Cardiac septum (tissue), 1 donor: ENCODE measurements at regions of chr1 and their contacts with region 1.

Region 1: GRCh38 chr1:45686317-45687013 is at the start of gene GPBP1L1:
- DNase-seq: peak; percentile 99
- total RNA-seq, gene GPBP1L1: 80.6 TPM

Region 2: DNA sequence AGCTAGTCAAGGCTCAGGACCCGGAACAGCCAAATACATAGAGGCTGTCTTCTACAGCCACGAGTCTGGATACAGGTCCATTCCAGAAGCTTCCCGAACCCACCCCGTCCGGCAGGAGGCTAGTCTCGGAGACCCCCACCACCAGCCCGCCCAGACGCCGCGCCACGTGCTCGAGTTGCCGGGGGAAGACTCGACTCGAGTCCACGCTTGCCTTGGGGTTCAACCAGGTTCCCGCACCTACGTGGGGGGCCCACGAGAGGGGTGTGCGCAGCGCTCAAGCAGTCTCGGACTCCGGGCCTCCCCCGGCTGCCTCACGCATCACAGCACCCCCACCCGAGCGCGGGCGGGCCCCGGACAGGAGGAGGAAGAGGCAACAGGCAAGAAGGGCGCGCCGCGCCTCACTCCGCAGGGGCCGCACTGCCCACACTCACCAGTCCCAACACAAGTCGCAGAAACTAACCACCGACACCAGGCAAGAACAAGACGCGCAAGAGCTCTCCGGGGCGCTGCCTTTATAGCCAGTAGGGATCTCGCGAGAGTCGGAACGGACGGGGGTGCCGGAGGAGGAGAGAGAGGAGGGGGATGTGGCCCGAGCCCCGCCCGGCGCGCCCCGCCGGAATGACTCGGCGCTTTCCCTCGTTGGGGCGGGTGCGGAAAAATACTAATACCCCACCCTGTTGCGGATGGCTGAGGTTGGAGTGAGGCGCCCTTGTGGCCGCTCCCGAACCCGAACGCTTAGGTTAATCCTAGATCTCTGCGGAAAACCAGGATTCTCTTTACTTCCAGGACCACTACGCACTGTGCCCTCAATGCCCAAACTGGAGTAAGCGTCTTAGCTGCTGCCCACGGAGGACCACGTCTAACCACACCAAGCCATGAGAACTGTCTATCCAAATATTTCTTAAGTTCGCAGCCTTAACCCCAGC is 164.8 kb before region 1 on chr1 and contains the start of gene PRDX1:
- intact Hi-C with region 1: loop called (anchors 2 kb)
- DNase-seq: peak; percentile 97
- total RNA-seq, gene PRDX1: 267 TPM

Region 3: DNA sequence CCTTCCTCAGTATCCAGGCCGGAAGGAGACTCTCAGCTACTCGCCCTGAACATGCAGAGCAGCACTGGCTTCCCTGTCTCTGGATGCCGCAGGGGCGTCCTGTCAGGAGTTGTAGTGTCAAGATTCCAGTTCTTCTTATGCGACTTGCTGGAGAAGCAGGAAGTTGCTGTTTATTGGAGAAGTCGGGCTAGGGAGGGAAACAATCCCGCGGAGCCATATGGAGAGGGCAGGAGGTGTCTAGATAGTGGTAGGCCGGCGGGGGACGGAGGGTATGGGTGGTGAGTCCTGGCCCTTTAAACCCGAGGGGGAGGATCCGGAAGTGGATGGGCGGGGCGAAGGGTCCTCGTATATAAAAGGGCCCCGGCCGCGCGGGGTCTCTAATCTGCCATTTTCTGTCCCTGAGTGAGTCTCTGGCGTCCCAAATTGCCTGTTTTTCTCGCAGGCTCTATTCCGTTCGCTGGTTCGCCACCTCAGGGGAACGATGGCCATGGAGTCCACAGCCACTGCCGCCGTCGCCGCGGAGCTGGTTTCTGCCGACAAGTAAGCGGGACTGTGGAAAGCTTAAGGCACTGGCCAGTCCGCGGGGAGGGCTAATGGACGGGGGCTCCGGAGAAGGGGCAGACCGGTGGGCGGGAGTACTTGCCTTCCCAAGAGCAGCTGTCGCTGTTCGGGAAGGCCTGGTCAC is 102.7 kb before region 1 on chr1 and contains the start of gene NASP:
- intact Hi-C with region 1: loop called (anchors 2 kb)
- DNase-seq: peak; percentile 93
- total RNA-seq, gene NASP: 30.1 TPM

Region 4: GRCh38 chr1:45750298-45751038 is 64.0 kb after region 1 on chr1 and contains the start of gene IPP:
- intact Hi-C with region 1: loop called (anchors 1 kb)
- DNase-seq: peak; percentile 99
- total RNA-seq, gene IPP: 17.2 TPM

Region 5: GRCh38 chr1:45803301-45803780 is 116.9 kb after region 1 on chr1 and contains the start of gene MAST2:
- intact Hi-C with region 1: loop called (anchors 5 kb)
- DNase-seq: peak; percentile 95
- total RNA-seq, gene MAST2: 81.2 TPM

Region 6: DNA sequence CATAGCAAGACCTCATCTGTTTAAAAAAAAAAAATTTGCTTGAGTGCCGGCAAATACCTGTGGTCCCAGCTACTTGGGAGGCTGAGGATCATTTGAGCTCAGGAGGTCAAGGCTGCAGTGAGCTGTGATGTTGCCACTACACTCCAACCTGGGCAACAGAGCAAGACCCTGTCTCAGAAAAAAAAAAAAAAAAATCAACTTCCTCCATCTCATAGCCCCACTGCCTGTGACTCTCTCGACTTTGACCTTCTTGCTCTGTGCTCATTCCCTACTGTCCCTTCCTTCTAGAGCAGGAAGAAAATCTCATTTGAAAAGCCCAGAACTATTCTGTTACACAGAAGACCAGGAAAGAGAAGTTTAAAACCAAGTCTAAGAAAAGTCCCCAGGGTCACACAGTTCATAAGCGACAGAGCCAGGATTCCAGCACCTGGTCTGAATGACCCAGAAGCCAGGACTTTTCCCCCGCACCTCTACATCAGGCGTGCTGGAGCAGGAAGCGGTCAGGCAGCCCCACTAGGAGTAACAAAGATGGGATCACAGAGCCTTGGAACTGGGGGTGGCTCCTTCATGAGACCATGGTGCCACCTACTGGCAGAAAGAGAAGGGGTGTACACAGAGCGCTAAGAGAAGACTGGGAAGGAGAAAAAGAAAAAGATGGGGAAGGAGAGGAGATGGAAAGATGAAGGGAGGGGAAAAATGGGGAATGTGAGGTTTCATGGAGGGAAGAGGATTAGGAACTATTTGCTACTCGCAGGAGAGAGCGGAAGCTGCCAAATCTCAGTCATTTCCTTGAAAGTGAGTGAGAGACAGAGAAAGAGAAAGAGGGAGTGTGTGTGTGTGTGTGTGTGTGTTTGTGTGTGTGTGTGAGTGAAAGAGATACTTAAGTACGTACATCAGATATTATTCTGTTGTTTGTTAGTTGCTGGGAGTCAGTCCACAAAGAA is 492.9 kb after region 1 on chr1:
- intact Hi-C with region 1: loop called (anchors 10 kb)
- DNase-seq: no peak